ENCODE measurements at regions of chr11 and their contacts with region 1.

Region 1: GRCh38 chr11:75532200-75533048 is 6.7 kb upstream of the GDPD5 start:
- DNase-seq: peak; percentile 40
- ATAC-seq: peak; percentile 54
- H3K4me3 ChIP-seq: no peak overlapping the region
- H3K27ac ChIP-seq: no peak overlapping the region
- H3K4me1 ChIP-seq: peaks cover 17% of the 10 kb centered on the region
- H3K27me3 ChIP-seq: no peaks in the 10 kb centered on the region
- CTCF ChIP-seq: peak; percentile 77 to 94 (median 85); a peak in 5 of 6 replicates
- EP300 ChIP-seq: no peak
- POLR2A ChIP-seq: no peak
- RAD21 ChIP-seq: peak; percentile 98

Region 2: GRCh38 chr11:75280227-75280701 is 252.2 kb before region 1 on chr11:
- CTCF ChIA-PET with region 1: interaction called, 11 read pairs
- POLR2A ChIA-PET with region 1: no interaction called
- RAD21 ChIA-PET with region 1: interaction called, 5 read pairs
- SMC1A ChIA-PET with region 1: no interaction called
- in situ Hi-C with region 1: no loop called
- intact Hi-C with region 1: loop called (anchors 5 kb)
- DNase-seq: peak; percentile 16
- ATAC-seq: peak; percentile 98
- H3K4me3 ChIP-seq: no peak overlapping the region
- H3K27ac ChIP-seq: no peak overlapping the region
- H3K4me1 ChIP-seq: no peaks in the 10 kb centered on the region
- H3K27me3 ChIP-seq: no peaks in the 10 kb centered on the region; a peak in 1 of 4 replicates
- CTCF ChIP-seq: peak; percentile 93 to 96 (median 93)
- EP300 ChIP-seq: no peak
- POLR2A ChIP-seq: no peak
- RAD21 ChIP-seq: peak; percentile 90

Region 3: DNA sequence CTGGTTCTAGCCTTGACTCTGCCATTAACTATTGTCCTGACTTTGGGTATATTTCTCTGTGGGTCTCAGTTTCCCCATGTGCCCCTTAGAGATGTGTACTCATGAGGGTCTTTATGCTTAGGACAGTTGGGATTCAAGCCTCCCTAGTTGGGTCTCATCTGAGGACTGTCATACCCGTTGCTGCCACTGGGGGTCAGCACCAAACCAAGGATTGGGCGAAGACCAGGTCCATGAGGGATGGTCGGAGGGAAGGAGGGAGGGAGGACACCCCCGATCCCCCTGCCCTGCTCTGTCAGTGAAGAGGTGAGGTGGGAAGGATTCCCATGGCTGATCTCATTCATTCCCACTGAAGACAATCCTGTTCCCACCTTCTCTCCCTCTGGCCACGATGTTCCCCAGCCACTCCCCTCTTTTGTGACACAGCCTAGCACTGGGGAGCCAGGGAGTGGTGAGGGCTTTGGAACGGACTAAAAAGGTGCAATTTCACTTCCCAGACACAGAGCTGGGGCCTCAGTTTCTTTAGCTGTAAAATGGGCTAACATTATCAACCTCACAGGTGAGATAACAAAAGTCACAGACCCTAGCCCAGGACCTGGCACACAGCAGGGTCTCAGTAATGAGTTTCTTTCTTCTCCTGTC is 87.0 kb before region 1 on chr11:
- CTCF ChIA-PET with region 1: interaction called, 288 read pairs
- POLR2A ChIA-PET with region 1: interaction called, 3 read pairs
- RAD21 ChIA-PET with region 1: interaction called, 53 read pairs
- SMC1A ChIA-PET with region 1: interaction called, 114 read pairs
- in situ Hi-C with region 1: loop called (anchors 5 kb)
- intact Hi-C with region 1: loop called (anchors 1 kb)
- DNase-seq: peak; percentile 19
- ATAC-seq: peak; percentile 91
- H3K4me3 ChIP-seq: no peak overlapping the region
- H3K27ac ChIP-seq: no peak overlapping the region
- H3K4me1 ChIP-seq: no peaks in the 10 kb centered on the region
- H3K27me3 ChIP-seq: no peaks in the 10 kb centered on the region
- CTCF ChIP-seq: peak; percentile 93 to 99 (median 97); a peak in 5 of 6 replicates
- EP300 ChIP-seq: no peak
- POLR2A ChIP-seq: no peak
- RAD21 ChIP-seq: peak; percentile 100

Region 4: GRCh38 chr11:75450826-75451821 is 81.3 kb before region 1 on chr11:
- CTCF ChIA-PET with region 1: interaction called, 288 read pairs
- POLR2A ChIA-PET with region 1: interaction called, 3 read pairs
- RAD21 ChIA-PET with region 1: interaction called, 53 read pairs
- SMC1A ChIA-PET with region 1: interaction called, 114 read pairs
- in situ Hi-C with region 1: loop called (anchors 5 kb)
- intact Hi-C with region 1: no loop called
- DNase-seq: no peak
- ATAC-seq: peak; percentile 72
- H3K4me3 ChIP-seq: no peak overlapping the region
- H3K27ac ChIP-seq: no peak overlapping the region
- H3K4me1 ChIP-seq: no peaks in the 10 kb centered on the region
- H3K27me3 ChIP-seq: no peaks in the 10 kb centered on the region
- CTCF ChIP-seq: peak; percentile 35 to 59 (median 58)
- EP300 ChIP-seq: no peak
- POLR2A ChIP-seq: no peak
- RAD21 ChIP-seq: 0 out of 2 replicates have a peak, but pooled peaks have one; percentile 16

Region 5: GRCh38 chr11:75520688-75521087 is 11.7 kb before region 1 on chr11:
- CTCF ChIA-PET with region 1: interaction called, 81 read pairs
- POLR2A ChIA-PET with region 1: interaction called, 7 read pairs
- RAD21 ChIA-PET with region 1: interaction called, 10 read pairs
- SMC1A ChIA-PET with region 1: interaction called, 14 read pairs
- in situ Hi-C with region 1: no loop called
- intact Hi-C with region 1: no loop called
- DNase-seq: no peak
- ATAC-seq: no peak
- H3K4me3 ChIP-seq: no peak overlapping the region
- H3K27ac ChIP-seq: no peak overlapping the region
- H3K4me1 ChIP-seq: peaks cover 43% of the 10 kb centered on the region
- H3K27me3 ChIP-seq: 0 out of 4 replicates have a peak, but pooled peaks cover 0 to 3% of the 10 kb centered on the region in 2 experiments
- CTCF ChIP-seq: no peak
- EP300 ChIP-seq: no peak
- POLR2A ChIP-seq: no peak
- RAD21 ChIP-seq: no peak

Region 6: GRCh38 chr11:75615706-75616105 is 83.3 kb after region 1 on chr11:
- CTCF ChIA-PET with region 1: no interaction called
- POLR2A ChIA-PET with region 1: no interaction called
- RAD21 ChIA-PET with region 1: no interaction called
- SMC1A ChIA-PET with region 1: no interaction called
- in situ Hi-C with region 1: no loop called
- intact Hi-C with region 1: no loop called
- DNase-seq: no peak
- ATAC-seq: no peak
- H3K4me3 ChIP-seq: no peak overlapping the region
- H3K27ac ChIP-seq: no peak overlapping the region
- H3K4me1 ChIP-seq: no peaks in the 10 kb centered on the region
- H3K27me3 ChIP-seq: no peaks in the 10 kb centered on the region
- CTCF ChIP-seq: no peak
- EP300 ChIP-seq: no peak
- POLR2A ChIP-seq: no peak
- RAD21 ChIP-seq: no peak

Measured in GM12878 (cell line).